ENCODE measurements at regions of chr18 and their contacts with region 1.

Region 1: GRCh38 chr18:23032030-23032582 is 99.0 kb downstream of the RBBP8 start:
- DNase-seq: no peak
- ATAC-seq: no peak
- H3K4me3 Mint-ChIP-seq: no peak overlapping the region
- H3K27ac Mint-ChIP-seq: no peak overlapping the region
- H3K4me1 Mint-ChIP-seq: no peaks in the 10 kb centered on the region
- H3K27me3 Mint-ChIP-seq: no peaks in the 10 kb centered on the region
- CTCF ChIP-seq: no peak

Region 2: GRCh38 chr18:22856870-22857269 is 175.2 kb before region 1 on chr18:
- CTCF ChIA-PET with region 1: no interaction called
- POLR2A ChIA-PET with region 1: no interaction called
- intact Hi-C with region 1: no loop called
- DNase-seq: no peak
- ATAC-seq: no peak
- H3K4me3 Mint-ChIP-seq: no peak overlapping the region
- H3K27ac Mint-ChIP-seq: no peak overlapping the region
- H3K4me1 Mint-ChIP-seq: no peaks in the 10 kb centered on the region
- H3K27me3 Mint-ChIP-seq: peaks cover 5% of the 10 kb centered on the region
- CTCF ChIP-seq: no peak

Region 3: GRCh38 chr18:22883179-22883578 is 148.9 kb before region 1 on chr18:
- CTCF ChIA-PET with region 1: no interaction called
- POLR2A ChIA-PET with region 1: no interaction called
- intact Hi-C with region 1: no loop called
- DNase-seq: no peak
- ATAC-seq: no peak
- H3K4me3 Mint-ChIP-seq: no peak overlapping the region
- H3K27ac Mint-ChIP-seq: no peak overlapping the region
- H3K4me1 Mint-ChIP-seq: no peaks in the 10 kb centered on the region
- H3K27me3 Mint-ChIP-seq: no peaks in the 10 kb centered on the region
- CTCF ChIP-seq: no peak

Region 4: GRCh38 chr18:23356915-23357601 is 325.0 kb after region 1 on chr18:
- CTCF ChIA-PET with region 1: interaction called, 4 read pairs
- POLR2A ChIA-PET with region 1: no interaction called
- intact Hi-C with region 1: loop called (anchors 1 kb)
- DNase-seq: no peak
- ATAC-seq: no peak
- H3K4me3 Mint-ChIP-seq: no peak overlapping the region
- H3K27ac Mint-ChIP-seq: no peak overlapping the region
- H3K4me1 Mint-ChIP-seq: peaks cover 33% of the 10 kb centered on the region
- H3K27me3 Mint-ChIP-seq: no peaks in the 10 kb centered on the region
- CTCF ChIP-seq: no peak

Region 5: DNA sequence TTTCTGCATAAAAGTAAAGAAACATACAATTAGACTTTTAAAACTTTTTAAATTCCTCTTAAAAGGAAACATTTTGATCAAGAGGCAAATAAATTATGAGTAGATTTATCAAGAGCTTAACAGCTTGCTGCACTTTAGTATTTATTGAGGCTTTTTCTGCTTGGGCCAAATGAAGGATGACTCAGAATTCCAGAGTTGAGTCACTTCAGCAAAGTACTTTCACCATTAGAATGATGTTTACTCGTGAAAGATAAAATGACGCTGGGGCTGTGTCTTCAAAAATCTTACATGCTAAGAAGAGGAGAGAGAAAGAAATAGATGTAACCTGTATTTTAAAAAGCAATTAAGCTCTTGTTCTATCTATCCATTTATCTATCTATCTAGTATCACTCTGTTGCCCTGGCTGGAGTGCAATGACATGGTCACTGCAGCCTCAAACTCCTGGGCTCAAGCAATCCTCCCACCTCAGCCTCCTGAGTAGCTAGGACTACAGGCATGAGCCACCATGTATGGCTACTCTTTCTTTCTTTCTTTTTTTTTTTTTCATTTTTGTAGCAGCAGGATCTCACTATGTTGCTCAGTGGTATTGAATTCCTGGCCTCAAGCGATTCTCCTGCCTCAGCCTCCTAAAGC is 345.7 kb after region 1 on chr18:
- CTCF ChIA-PET with region 1: interaction called, 19 read pairs
- POLR2A ChIA-PET with region 1: no interaction called
- intact Hi-C with region 1: loop called (anchors 1 kb)
- DNase-seq: no peak
- ATAC-seq: peak; percentile 50
- H3K4me3 Mint-ChIP-seq: no peak overlapping the region
- H3K27ac Mint-ChIP-seq: no peak overlapping the region
- H3K4me1 Mint-ChIP-seq: peaks cover 8% of the 10 kb centered on the region
- H3K27me3 Mint-ChIP-seq: no peaks in the 10 kb centered on the region
- CTCF ChIP-seq: no peak

Region 6: GRCh38 chr18:23406271-23406787 is 374.2 kb after region 1 on chr18:
- CTCF ChIA-PET with region 1: interaction called, 20 read pairs
- POLR2A ChIA-PET with region 1: interaction called, 3 read pairs
- intact Hi-C with region 1: loop called (anchors 1 kb)
- DNase-seq: no peak
- ATAC-seq: no peak
- H3K4me3 Mint-ChIP-seq: no peak overlapping the region
- H3K27ac Mint-ChIP-seq: no peak overlapping the region
- H3K4me1 Mint-ChIP-seq: no peaks in the 10 kb centered on the region
- H3K27me3 Mint-ChIP-seq: no peaks in the 10 kb centered on the region
- CTCF ChIP-seq: no peak

Region 7: GRCh38 chr18:23412351-23412964 is 380.4 kb after region 1 on chr18:
- CTCF ChIA-PET with region 1: interaction called, 20 read pairs
- POLR2A ChIA-PET with region 1: interaction called, 3 read pairs
- intact Hi-C with region 1: loop called (anchors 1 kb)
- DNase-seq: no peak
- ATAC-seq: no peak
- H3K4me3 Mint-ChIP-seq: no peak overlapping the region
- H3K27ac Mint-ChIP-seq: no peak overlapping the region
- H3K4me1 Mint-ChIP-seq: peaks cover 7% of the 10 kb centered on the region
- H3K27me3 Mint-ChIP-seq: no peaks in the 10 kb centered on the region
- CTCF ChIP-seq: no peak

Measured in activated B cell treated with CpG ODN at 0.5 μM for 24 hours (primary cell).